Lower leg skin (tissue), 4 donors: ENCODE measurements at regions of chr2 and their contacts with region 1.

Region 1: DNA sequence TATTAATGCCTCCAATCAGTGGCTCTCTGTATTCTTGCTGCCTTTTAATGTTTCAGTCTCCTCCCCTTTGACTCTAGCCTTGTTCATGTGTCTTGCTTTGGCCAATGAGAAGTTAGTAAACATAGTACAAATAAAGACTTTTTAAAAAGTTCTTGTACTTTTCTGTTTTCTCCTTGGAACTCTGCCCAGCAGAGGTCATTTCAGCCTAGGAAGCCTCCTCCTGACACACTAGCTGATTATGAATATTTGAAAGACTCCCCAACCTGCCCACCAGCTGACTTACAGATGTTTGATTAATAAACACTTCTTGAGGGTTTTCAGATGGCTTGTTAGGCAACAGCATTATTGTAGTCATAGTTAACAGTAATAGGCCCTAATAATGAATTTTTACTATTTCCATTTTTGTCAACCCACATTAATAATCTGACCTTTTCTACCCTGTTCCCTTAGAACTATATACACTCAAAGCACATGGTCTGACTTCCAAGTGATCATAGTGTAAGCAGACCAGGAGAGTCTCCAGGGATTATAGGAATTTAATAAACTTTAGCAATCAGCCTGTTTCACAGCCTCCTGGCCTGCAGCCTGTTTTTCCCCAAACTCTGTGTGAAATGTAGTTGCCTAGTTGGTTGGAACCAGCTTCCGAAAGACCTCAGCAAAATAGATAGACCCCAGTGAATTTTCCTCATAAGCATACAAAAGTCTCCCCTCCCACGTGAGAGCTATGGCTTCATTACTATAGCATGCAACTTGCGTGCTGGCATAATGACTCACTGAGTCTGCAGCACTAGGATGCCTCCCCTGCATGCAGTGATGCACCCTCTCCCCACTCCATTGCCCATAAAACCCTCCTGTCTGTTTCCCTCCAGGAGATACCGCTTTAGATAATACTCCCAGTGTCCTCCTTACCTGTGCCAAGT is 670.7 kb upstream of the ZNF804A start:
- DNase-seq: no peak
- H3K4me3 ChIP-seq: no peak overlapping the region
- CTCF ChIP-seq: no peak
- POLR2A ChIP-seq: no peak

Region 2: GRCh38 chr2:183898641-183899040 is 29.0 kb before region 1 on chr2:
- intact Hi-C with region 1: loop called (anchors 1 kb)
- DNase-seq: no peak
- H3K4me3 ChIP-seq: no peak overlapping the region
- CTCF ChIP-seq: no peak
- POLR2A ChIP-seq: no peak

Region 3: DNA sequence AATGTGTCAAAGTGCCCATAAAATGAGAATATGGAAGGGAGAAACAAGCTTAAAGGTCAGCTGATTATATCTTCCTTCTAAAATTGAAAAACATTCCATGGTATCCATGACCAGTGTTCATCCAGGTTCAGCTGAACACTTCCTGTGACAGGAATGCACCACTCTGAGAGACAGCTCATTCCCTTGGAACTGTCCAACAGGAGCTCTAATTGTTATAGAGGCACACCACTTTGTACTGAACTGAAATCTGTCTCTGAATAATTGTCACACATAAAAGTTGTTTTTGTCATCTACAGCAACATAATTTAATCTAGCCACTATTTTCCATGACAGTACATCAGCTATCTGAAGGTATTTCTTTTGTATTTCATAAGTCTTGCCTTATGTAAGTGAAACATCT is 474.7 kb after region 1 on chr2:
- intact Hi-C with region 1: no loop called
- DNase-seq: no peak
- H3K4me3 ChIP-seq: no peak overlapping the region
- CTCF ChIP-seq: no peak
- POLR2A ChIP-seq: no peak